Right ventricle myocardium inferior (tissue), 1 donor: ENCODE measurements at regions of chr3 and their contacts with region 1.

Region 1: GRCh38 chr3:127822698-127823425 is 547 bp upstream of the MGLL start:
- DNase-seq: no peak
- ATAC-seq: peak; percentile 86

Region 2: DNA sequence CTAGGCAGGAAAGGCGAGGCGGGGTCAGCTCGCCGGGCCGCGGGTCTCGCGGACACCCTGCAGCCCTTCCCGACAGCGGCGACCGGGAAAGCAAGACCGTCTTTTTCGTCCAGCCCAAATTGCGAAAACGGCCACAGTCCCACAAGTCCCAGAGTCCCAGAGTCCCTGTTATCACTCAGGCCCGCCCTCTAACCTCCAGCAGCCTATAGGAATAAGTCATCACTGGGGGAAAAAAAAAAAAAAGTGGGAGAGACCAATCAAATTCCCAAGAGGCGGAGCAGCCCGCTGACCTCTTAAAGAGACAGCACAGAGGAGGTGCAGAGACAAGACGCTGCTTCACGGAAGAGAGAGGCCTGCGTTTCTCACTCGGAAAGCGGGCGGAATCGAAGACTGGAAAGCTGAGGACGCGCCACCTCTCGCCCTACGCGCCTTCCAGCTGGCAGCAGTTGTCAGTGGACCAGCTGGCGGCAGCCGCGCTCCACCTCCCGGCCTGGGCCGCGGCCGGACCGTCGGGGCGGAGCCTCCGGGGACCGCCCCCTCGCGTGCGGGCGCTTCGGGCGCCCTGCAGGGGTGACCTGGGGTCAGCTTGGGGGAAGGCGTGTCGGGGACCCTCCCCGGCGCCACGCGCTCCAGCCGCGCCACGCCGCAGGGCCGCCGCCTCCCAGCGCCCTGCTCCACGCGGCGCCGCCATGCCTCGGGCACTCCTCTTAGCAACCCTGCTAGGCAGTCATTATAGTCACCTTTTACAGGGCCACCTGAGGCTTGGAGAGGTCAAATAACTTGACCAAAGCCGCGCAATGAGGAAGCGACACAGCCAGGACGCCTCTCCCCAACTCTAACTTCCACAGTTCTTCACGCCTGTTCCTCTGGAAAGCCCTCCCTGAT is 232.0 kb before region 1 on chr3 and contains the start of gene TPRA1:
- intact Hi-C with region 1: loop called (anchors 5 kb)
- DNase-seq: peak; percentile 96
- ATAC-seq: peak; percentile 94
- total RNA-seq, gene TPRA1: 21.3 TPM

Region 3: GRCh38 chr3:127652231-127652995 is 170.4 kb before region 1 on chr3:
- intact Hi-C with region 1: no loop called
- DNase-seq: no peak
- ATAC-seq: peak; percentile 86

Region 4: DNA sequence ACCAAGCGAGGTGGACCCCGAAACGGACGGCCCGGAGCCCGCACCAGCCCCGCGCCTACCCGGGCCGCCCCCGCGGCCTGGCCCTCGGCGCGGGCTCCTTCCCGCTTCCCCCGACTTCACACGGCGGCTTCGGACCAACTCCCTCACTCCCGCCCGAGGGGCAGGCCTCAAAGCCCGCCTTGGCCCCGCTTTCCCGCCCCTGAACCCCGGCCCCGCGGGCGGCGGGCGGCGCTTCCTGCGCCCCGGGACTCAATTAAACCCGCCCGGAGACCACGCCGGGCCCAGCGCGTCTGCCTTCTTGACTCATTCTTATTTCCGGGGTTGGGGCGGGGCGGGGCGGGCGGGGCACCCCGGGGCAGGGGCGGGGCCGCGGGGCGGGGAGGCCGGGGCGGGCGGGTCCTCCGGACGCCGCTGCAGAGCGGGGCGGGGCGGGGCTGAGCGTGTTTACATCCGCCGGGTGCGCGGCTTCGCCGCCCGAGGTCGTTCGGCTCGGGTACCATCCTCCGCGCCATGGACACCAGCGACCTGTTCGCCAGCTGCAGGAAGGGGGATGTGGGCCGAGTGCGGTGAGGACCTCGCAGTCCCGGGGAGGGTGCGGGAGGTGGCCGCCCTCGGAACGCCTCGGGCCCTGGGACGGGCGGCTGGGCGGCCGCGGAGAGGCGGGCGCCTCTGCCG is 150.2 kb before region 1 on chr3 and contains the start of gene ABTB1:
- intact Hi-C with region 1: loop called (anchors 5 kb)
- DNase-seq: peak; percentile 96
- ATAC-seq: peak; percentile 90
- total RNA-seq, gene ABTB1: 31.7 TPM

Region 5: DNA sequence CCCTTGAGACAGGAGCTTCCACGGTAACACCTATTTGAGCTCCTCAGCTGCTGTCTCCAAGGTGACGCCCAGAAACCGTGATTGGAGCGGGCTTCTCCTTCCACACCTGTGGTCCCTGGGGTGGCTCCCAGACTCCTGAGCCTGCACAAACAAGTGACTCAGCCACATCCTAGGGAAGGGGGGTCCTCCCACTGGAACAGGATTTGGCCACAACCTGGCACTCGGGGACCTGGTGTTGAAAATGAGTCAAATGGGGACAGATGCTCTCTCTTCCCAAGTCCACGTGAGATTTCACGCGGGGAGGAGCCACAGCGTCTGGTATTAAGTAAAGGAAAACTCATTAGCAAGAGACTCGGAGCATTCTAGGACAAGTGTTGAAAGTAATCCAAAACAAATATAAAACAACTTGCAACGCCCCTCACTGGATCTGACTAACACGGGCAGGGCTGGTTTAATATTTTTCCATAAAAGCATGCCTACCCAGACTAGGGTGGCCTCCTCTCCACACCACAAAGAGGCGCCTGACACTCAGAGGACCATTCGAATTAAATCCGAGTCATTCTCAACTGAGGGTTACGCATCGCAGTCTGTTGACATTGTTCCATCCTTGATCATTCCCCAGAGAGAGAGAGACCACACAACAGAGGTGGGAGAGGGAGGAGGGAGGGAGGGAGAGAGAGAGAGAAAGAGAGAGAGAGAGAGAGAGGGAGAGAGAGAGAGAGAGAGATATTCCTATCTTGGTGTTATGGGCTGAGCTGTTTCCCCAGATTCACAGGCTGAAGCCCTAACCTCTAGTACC is 74.9 kb before region 1 on chr3:
- intact Hi-C with region 1: loop called (anchors 2 kb)
- DNase-seq: peak; percentile 82
- ATAC-seq: peak; percentile 82

Region 6: DNA sequence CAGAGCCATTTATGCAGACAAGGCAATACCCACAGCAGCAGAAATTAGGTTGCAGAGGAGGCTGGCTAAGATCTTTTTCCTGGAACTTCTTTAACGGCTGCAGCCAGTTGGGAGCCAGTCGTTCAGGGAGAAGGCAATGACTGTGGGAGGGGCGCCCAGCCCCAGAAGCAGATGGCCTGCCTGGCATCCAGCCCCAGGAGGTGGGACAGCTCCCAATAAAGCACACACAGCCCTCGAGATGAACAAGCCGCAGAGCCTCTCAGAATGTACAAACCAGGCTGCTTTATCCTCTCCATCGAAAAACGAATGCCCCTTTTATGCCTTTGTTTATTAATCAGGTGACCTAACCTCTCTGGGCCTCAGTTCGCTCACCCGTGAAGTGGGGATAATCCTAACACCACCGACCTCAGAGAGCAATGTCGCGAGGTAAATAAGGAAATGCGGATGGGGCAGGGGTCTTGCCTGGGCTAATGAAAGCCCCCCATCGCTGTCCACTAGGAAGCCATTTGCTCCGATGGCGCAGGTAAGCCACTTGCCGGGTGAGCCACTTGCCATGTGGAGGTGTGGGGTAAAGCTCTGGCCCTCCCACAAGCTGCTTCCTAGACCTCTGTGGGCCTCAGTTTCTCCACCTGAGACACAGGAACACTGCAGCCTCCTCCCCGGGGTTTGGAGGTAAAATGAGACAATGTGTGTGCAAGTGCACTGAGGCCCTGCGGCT is 36.4 kb before region 1 on chr3:
- intact Hi-C with region 1: loop called (anchors 5 kb)
- DNase-seq: peak; percentile 91
- ATAC-seq: peak; percentile 80

Region 7: GRCh38 chr3:127915115-127915936 is 92.5 kb after region 1 on chr3 and contains the start of gene KBTBD12:
- intact Hi-C with region 1: loop called (anchors 2 kb)
- DNase-seq: peak; percentile 81
- ATAC-seq: peak; percentile 83
- total RNA-seq, gene KBTBD12: 29.7 TPM